ENCODE measurements at regions of chr10 and their contacts with region 1.

Region 1: GRCh38 chr10:110425684-110426293 is 71.9 kb upstream of the DUSP5 start:
- DNase-seq: peak; percentile 98
- H3K4me3 ChIP-seq: no peak overlapping the region
- CTCF ChIP-seq: no peak

Region 2: GRCh38 chr10:110414563-110415309 is 11.1 kb before region 1 on chr10:
- CTCF ChIA-PET with region 1: interaction called, 12 read pairs
- POLR2A ChIA-PET with region 1: interaction called, 21 read pairs
- DNase-seq: no peak
- H3K4me3 ChIP-seq: no peak overlapping the region
- CTCF ChIP-seq: no peak

Region 3: GRCh38 chr10:110446954-110447608 is 21.3 kb after region 1 on chr10:
- CTCF ChIA-PET with region 1: interaction called, 14 read pairs
- POLR2A ChIA-PET with region 1: no interaction called
- DNase-seq: no peak
- H3K4me3 ChIP-seq: no peak overlapping the region
- CTCF ChIP-seq: no peak